ENCODE measurements at regions of chr18 and their contacts with region 1.

Region 1: GRCh38 chr18:46315187-46315586 is 211.0 kb downstream of the HAUS1 start:
- DNase-seq: no peak
- ATAC-seq: no peak

Region 2: DNA sequence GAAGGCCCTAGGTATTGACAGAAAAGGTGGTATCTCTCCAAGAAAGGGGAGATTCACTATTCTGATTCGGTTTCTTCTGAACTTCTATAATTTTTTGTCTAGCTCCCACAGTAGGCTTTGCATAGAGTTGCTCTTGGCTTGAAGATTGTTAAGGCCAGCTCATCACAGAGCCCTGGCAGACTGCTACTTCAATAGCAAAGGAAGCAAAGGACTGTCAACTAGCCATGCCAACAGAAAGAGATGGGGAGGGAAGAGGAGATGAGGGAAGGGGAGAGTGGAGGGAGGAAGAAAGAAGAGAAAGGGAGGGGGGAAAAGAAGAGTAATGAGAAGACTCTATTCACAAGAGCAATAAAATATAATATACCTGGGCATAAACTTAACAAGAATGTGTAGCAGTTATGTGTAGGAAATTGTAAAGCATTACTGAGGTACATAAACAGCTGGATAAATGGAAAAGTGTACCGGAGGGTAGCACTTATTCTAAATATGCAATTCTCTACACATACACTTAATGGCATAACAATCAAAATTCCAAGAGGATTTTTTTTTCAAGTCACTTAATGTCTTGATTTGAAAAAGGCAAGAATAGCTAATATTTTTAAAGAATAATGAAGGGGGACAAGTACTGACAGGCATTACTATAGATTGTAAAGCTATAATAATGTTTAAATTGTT is 239.4 kb after region 1 on chr18:
- intact Hi-C with region 1: loop called (anchors 5 kb)
- DNase-seq: no peak
- ATAC-seq: no peak

Measured in sciatic nerve (tissue), 2 donors.